Naive thymus-derived CD8-positive, alpha-beta T cell (primary cell): ENCODE measurements at regions of chr19 and their contacts with region 1.

Region 1: GRCh38 chr19:47243776-47244547 is 12.4 kb upstream of the CCDC9 start:
- DNase-seq: peak; percentile 81 to 92 (median 89)
- ATAC-seq: peak; percentile 43 to 53
- H3K4me3 Mint-ChIP-seq: peak overlapping the region in 9 of 10 donors; percentile 68 to 93 (median 81)
- H3K27ac Mint-ChIP-seq: peak overlapping the region in 7 of 10 donors; percentile 22 to 97 (median 81)
- H3K4me1 Mint-ChIP-seq: peaks cover 9 to 41% (median 29%) of the 10 kb centered on the region in 4 donors
- H3K27me3 Mint-ChIP-seq: peaks cover 0 to 7% (median 0%) of the 10 kb centered on the region in 5 donors

Region 2: DNA sequence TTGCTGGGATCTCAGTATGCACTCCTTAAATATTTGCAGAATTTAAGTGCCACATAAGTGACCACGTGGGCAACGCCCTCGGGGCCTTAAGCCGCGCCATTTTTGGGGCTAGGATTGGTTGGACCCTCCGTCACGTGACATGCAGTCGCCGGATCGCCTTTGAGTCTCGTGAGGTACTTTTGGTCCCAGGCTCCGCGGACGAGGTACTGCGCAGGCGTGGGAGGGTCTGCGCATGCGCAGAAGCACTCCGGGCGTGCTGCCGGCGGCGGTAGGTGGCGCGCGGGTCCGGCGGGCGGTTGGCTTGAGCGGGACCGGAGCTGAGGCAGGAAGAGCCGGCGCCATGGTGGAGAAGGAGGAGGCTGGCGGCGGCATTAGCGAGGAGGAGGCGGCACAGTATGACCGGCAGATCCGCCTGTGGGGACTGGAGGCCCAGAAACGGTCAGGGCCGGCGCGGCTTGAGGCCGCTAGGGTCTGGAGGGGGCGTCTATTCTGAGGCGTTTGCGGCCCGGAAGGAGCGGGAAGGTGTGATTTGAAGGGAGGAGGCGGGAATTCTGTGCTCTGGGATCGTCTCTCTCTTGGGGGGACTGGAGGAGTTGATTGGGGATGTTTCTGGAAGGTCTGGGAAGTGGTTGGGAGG is 113.3 kb before region 1 on chr19 and contains the start of gene SAE1:
- POLR2A ChIA-PET with region 1: interaction called, 16 read pairs
- DNase-seq: peak; percentile 80 to 98 (median 90)
- ATAC-seq: peak; percentile 90 to 93
- H3K4me3 Mint-ChIP-seq: peak within 1 kb of the TSS; percentile 97 to 100 (median 99)
- H3K27ac Mint-ChIP-seq: peak within 1 kb of the TSS; percentile 92 to 98 (median 94)
- H3K4me1 Mint-ChIP-seq: peaks cover 35 to 58% (median 54%) of the 10 kb centered on the region in 4 donors
- H3K27me3 Mint-ChIP-seq: peaks cover 0 to 4% (median 0%) of the 10 kb centered on the region in 5 donors
- polyA plus RNA-seq, gene SAE1: 158 to 174 (median 159) TPM

Region 3: DNA sequence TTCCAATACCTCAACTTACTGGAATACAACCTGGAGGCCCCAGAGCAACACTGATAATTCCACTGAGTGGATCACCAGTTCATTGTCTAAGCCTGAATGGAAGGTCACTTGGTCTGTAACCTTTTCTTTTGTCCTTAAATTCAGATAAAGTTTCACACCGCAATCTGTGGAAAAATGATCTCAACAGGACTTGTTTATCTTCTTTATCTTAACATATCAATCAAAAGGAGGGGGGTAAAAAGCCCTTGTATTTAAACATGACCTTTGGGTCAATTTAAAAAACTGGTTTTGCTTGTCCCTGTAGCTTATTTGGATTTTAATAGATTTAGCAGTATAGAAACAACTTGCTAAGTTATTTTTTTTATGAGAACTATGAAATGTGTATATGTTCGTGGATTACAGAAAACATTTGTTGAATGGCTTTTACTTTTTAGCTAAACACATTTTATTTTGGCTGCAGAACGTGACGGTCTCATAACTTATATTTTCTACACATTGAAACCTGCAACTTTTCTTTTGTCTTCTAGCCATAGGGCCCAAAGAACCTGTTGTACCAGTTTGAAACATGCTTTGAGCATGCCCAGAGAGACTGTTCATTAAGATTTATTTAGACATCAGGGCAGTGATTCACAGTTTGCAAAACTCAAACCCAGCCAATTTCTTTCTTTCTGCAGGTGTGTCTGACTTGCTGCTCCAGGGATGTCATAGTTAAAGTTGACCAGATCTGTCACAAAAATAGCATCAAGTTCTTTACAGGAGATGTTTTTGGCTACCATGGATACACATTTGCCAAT is 91.5 kb before region 1 on chr19:
- POLR2A ChIA-PET with region 1: interaction called, 61 read pairs
- DNase-seq: no peak
- ATAC-seq: no peak
- H3K4me3 Mint-ChIP-seq: no peak overlapping the region
- H3K27ac Mint-ChIP-seq: peak overlapping the region in 4 of 10 donors; percentile 21 to 69 (median 40)
- H3K4me1 Mint-ChIP-seq: peaks cover 16 to 71% (median 41%) of the 10 kb centered on the region in 4 donors
- H3K27me3 Mint-ChIP-seq: no peaks in the 10 kb centered on the region

Region 4: GRCh38 chr19:47190167-47190727 is 53.7 kb before region 1 on chr19:
- POLR2A ChIA-PET with region 1: interaction called, 34 read pairs
- DNase-seq: peak; percentile 19 to 69 (median 43)
- ATAC-seq: peak; percentile 29 to 44
- H3K4me3 Mint-ChIP-seq: peak overlapping the region in 9 of 10 donors; percentile 44 to 82 (median 64)
- H3K27ac Mint-ChIP-seq: peak overlapping the region; percentile 0 to 99 (median 96)
- H3K4me1 Mint-ChIP-seq: peaks cover 27 to 81% (median 67%) of the 10 kb centered on the region in 4 donors
- H3K27me3 Mint-ChIP-seq: no peaks in the 10 kb centered on the region

Region 5: DNA sequence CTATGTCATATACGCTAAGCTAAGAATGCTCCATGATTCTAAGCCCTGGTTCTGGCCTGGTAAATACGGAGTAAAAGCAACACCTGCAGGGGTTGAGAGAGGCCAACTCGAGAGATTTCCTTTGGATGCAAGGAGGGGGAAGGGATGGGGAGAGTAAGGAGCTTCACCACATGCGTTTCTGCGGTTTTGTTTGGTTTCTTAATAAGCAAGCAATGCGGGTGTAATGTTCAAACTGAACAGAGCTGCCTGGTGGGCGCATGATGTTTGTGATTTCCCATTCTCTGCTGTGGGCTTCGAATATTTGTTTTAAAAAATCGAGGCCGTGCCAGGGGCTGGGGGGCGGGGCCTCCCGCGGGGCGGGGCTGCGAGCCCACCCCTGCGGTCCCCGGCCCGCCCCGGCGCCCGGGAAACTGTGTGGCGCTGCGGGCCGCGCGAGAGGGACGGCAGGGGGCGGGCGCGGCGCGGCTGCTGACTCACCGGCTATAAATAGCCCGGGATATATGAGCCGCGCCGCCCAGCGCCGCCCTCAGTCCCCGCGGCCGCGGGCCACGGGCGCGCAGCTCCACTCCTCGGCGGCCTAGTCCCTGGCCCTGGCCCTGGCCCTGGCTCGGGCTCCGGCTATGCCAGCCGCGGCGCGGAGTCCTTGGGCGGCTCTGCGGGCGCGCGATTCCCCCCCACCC is 18.1 kb before region 1 on chr19:
- POLR2A ChIA-PET with region 1: interaction called, 116 read pairs
- DNase-seq: peak; percentile 81 to 91 (median 86)
- ATAC-seq: peak; percentile 55 to 62
- H3K4me3 Mint-ChIP-seq: peak overlapping the region in 9 of 10 donors; percentile 61 to 89 (median 75)
- H3K27ac Mint-ChIP-seq: peak overlapping the region; percentile 6 to 94 (median 88)
- H3K4me1 Mint-ChIP-seq: peaks cover 6 to 21% (median 12%) of the 10 kb centered on the region in 4 donors
- H3K27me3 Mint-ChIP-seq: no peaks in the 10 kb centered on the region

Region 6: DNA sequence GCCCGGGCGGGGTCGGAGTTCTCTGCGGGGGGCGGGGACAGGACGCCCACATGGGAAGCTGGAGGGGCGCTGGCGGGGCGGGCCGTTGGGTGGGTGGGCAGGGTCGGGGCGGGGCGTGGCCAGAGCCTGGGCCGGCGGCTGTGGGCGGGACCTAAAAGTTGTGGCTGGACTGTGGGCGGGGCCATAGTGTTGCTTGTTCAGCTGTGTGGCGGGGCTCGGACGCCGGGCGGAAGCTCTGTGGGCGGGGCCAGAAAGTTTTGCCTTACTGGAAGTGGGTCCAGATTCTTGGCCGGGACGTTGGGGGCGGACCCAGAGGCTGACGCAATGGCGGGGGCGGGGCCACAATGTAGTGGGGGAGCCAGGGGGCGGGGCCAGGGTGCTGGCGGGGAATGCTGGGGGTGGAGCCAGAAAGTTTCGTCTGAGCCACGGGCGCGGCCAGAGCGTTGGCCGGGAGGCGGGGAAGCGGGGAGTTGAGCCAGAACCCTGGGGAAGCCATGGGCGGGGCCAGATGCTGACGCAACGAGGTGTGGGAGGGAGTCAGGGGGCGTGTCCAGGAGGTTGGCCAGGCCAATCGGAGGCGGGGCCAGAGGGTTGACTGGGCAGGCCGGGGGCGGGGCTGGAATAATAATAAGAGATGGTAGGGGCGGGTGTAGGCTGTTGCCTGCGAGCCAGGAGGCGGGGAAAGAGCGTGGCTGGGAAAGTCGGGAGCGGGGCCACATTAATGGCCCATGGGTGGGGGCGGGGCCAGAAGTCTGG is 12.9 kb after region 1 on chr19:
- POLR2A ChIA-PET with region 1: interaction called, 34 read pairs
- DNase-seq: peak; percentile 94 to 99 (median 98)
- ATAC-seq: peak; percentile 74 to 82
- H3K4me3 Mint-ChIP-seq: peak overlapping the region; percentile 89 to 97 (median 93)
- H3K27ac Mint-ChIP-seq: peak overlapping the region; percentile 93 to 99 (median 97)
- H3K4me1 Mint-ChIP-seq: peaks cover 38 to 53% (median 45%) of the 10 kb centered on the region in 4 donors
- H3K27me3 Mint-ChIP-seq: no peaks in the 10 kb centered on the region

Region 7: GRCh38 chr19:47381653-47382279 is 137.8 kb after region 1 on chr19:
- POLR2A ChIA-PET with region 1: no interaction called
- DNase-seq: peak in 4 of 10 donors; percentile 7 to 30 (median 16)
- ATAC-seq: peak; percentile 66 to 70
- H3K4me3 Mint-ChIP-seq: peak overlapping the region in 4 of 10 donors; percentile 4 to 64 (median 50)
- H3K27ac Mint-ChIP-seq: peak overlapping the region; percentile 58 to 97 (median 82)
- H3K4me1 Mint-ChIP-seq: peaks cover 8 to 25% (median 23%) of the 10 kb centered on the region in 4 donors
- H3K27me3 Mint-ChIP-seq: no peaks in the 10 kb centered on the region